PC-9 (cell line): ENCODE measurements at regions of chr10 and their contacts with region 1.

Region 1: GRCh38 chr10:59625721-59626522 is 83.7 kb downstream of the SLC16A9 start:
- DNase-seq: peak; percentile 49 to 68
- H3K4me3 ChIP-seq: no peak overlapping the region
- H3K27ac ChIP-seq: no peak overlapping the region
- H3K4me1 ChIP-seq: no peaks in the 10 kb centered on the region
- H3K27me3 ChIP-seq: 0 out of 2 replicates have a peak, but pooled peaks cover 5% of the 10 kb centered on the region
- CTCF ChIP-seq: peak; percentile 95

Region 2: GRCh38 chr10:58414270-58415041 is 1211.5 kb before region 1 on chr10:
- CTCF ChIA-PET with region 1: no interaction called
- POLR2A ChIA-PET with region 1: no interaction called
- intact Hi-C with region 1: loop called (anchors 5 kb)
- DNase-seq: peak in 1 of 2 experiments; percentile 39
- H3K4me3 ChIP-seq: no peak overlapping the region
- H3K27ac ChIP-seq: no peak overlapping the region
- H3K4me1 ChIP-seq: no peaks in the 10 kb centered on the region
- H3K27me3 ChIP-seq: no peaks in the 10 kb centered on the region
- CTCF ChIP-seq: peak; percentile 68

Region 3: GRCh38 chr10:58952747-58953466 is 673.0 kb before region 1 on chr10:
- CTCF ChIA-PET with region 1: no interaction called
- POLR2A ChIA-PET with region 1: no interaction called
- intact Hi-C with region 1: loop called (anchors 1 kb)
- DNase-seq: peak in 1 of 2 experiments; percentile 15
- H3K4me3 ChIP-seq: no peak overlapping the region
- H3K27ac ChIP-seq: no peak overlapping the region
- H3K4me1 ChIP-seq: no peaks in the 10 kb centered on the region
- H3K27me3 ChIP-seq: no peaks in the 10 kb centered on the region
- CTCF ChIP-seq: peak; percentile 85

Region 4: DNA sequence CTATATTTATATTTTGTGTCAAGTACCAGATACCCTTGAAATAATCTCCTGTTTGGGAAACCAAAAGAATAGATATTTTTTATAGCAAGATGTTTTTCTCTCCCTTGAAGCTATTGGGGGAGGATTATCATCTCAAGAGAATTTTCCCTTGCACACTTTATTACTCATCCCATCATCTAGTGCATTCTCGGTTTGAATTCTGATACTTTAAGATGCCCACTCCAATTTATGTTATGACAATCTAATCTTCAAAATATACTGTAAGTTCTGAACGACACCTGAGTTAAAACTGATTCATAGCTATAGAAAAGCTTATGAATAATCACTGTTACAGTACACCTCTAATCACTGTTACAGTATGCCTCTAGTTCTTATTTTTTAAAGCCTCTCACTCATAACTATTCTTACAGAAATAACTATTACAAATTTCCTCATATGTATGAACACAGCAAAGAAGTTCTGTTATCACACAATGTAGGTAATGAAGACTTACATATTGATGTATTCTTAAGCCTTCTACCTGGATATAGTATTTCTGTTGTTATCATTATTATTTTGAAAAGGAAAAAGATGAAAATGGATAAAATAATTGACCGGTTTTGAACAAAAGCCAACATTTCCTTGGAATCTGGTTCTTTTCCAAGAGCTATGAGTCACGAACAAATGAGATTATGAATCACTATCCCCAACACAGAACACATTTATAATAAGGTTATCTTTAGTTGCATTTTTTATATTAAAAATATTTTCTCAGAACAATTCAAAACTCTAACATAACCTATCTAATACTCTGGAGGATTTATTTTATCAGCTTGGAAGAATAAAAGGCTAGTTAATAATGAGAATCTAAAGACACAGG is 191.2 kb before region 1 on chr10:
- CTCF ChIA-PET with region 1: no interaction called
- POLR2A ChIA-PET with region 1: no interaction called
- intact Hi-C with region 1: no loop called
- DNase-seq: no peak
- H3K4me3 ChIP-seq: no peak overlapping the region
- H3K27ac ChIP-seq: no peak overlapping the region
- H3K4me1 ChIP-seq: no peaks in the 10 kb centered on the region
- H3K27me3 ChIP-seq: no peaks in the 10 kb centered on the region
- CTCF ChIP-seq: no peak

Region 5: DNA sequence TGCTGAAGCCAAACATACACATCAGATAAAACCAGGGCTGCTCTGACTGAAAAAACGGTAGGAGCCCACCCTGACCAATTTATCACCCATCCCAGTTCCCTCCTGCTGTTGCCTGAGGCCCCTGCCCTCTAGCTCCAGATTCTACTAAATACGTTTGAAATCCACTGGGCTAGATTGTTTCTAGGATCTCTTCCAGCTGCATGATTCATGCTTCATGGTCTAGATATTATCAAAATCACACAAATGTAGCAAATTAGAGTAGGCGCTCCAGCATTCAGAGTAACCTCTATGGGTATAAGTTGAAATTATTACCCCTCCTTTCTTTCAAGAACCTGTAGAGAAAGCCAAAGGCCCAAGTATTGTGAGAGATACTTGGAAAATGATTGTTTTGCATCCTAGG is 112.4 kb before region 1 on chr10:
- CTCF ChIA-PET with region 1: no interaction called
- POLR2A ChIA-PET with region 1: no interaction called
- intact Hi-C with region 1: no loop called
- DNase-seq: no peak
- H3K4me3 ChIP-seq: no peak overlapping the region
- H3K27ac ChIP-seq: no peak overlapping the region
- H3K4me1 ChIP-seq: no peaks in the 10 kb centered on the region
- H3K27me3 ChIP-seq: no peaks in the 10 kb centered on the region; the same call in 1 of the 2 replicates
- CTCF ChIP-seq: no peak

Region 6: DNA sequence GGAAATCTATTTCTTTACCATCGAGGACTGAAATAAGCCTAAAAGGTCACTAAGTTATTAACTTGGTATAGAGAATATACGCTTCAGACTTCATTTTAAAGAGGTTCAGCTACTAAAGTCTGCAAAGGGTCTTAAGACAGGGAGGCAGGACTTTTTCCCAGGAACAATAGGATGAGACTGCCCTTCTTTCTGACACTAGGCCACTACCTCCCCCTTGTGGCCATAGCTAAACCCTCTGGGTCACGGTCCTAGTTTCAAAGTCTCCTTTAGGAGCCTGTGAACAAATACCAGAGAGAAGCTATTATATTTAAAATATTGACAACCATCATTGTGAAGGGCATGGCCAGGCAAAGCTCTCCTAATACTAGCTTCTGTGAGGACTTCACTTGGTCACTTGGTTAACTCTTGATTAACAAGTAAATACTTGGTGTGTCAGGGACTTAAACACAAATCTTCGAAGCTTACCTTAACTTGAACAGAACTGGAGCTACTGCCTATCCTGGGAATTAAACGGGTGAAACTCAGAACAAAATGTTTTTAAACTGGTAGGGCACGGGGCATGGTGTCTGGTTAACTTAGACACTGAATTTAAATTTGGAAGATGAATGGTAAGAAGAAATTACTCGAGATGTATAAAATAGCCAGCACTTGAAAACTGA is 204.8 kb after region 1 on chr10:
- CTCF ChIA-PET with region 1: no interaction called
- POLR2A ChIA-PET with region 1: no interaction called
- intact Hi-C with region 1: loop called (anchors 1 kb)
- DNase-seq: peak in 1 of 2 experiments; percentile 29
- H3K4me3 ChIP-seq: no peak overlapping the region
- H3K27ac ChIP-seq: no peak overlapping the region
- H3K4me1 ChIP-seq: no peaks in the 10 kb centered on the region
- H3K27me3 ChIP-seq: no peaks in the 10 kb centered on the region
- CTCF ChIP-seq: peak; percentile 88

Region 7: GRCh38 chr10:60048091-60048501 is 422.2 kb after region 1 on chr10:
- CTCF ChIA-PET with region 1: no interaction called
- POLR2A ChIA-PET with region 1: no interaction called
- intact Hi-C with region 1: loop called (anchors 1 kb)
- DNase-seq: peak; percentile 51
- H3K4me3 ChIP-seq: no peak overlapping the region
- H3K27ac ChIP-seq: no peak overlapping the region
- H3K4me1 ChIP-seq: no peaks in the 10 kb centered on the region
- H3K27me3 ChIP-seq: no peaks in the 10 kb centered on the region
- CTCF ChIP-seq: peak; percentile 78

Region 8: GRCh38 chr10:60434418-60435046 is 808.6 kb after region 1 on chr10:
- CTCF ChIA-PET with region 1: no interaction called
- POLR2A ChIA-PET with region 1: no interaction called
- intact Hi-C with region 1: loop called (anchors 1 kb)
- DNase-seq: peak; percentile 33 to 55
- H3K4me3 ChIP-seq: no peak overlapping the region
- H3K27ac ChIP-seq: no peak overlapping the region
- H3K4me1 ChIP-seq: no peaks in the 10 kb centered on the region
- H3K27me3 ChIP-seq: no peaks in the 10 kb centered on the region
- CTCF ChIP-seq: peak; percentile 93